ENCODE measurements at regions of chr7 and their contacts with region 1.

Region 1: DNA sequence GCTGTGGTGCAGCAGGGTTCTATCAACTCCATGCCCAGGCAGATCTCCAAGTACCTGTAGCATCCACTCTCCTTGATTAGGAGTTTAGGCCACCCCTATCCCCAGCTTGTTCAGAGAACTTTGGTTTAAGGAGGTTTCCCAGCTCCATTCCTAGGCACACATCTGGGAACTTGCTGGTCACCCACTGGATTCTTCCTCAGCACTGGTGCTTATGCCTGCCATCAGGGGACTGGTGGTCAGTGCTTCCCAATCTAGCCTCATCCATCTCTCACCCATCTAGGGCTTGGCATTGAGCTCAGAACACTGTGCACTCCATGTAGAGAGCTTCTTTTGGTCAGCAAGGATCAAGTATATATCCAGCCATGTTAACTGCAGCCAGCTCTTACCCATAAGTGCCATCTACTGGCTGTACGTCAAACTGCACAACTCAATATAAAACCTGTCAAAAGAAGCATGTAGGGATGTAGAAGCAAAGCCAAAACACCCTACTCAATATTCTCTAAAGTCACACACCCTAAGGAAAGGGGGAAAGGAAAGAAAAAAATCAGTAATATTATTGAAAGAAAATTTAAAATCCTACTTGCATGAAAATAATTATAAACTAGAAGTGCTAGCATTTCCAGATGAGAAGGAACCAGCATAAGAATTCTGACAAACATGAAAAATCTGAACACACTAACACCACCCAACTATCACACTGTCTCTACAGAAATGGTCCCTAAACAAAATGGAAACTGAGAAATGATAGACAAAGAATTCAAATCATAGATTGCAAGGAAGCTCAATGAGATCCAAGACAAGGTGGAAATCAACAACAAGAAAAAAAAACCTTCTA is 531.2 kb upstream of the STEAP1 start:
- DNase-seq: peak; percentile 52
- ATAC-seq: peak; percentile 84
- H3K4me3 ChIP-seq: no peak overlapping the region
- H3K27ac ChIP-seq: no peak overlapping the region
- H3K4me1 ChIP-seq: no peaks in the 10 kb centered on the region
- H3K27me3 ChIP-seq: no peaks in the 10 kb centered on the region
- CTCF ChIP-seq: peak; percentile 72

Region 2: DNA sequence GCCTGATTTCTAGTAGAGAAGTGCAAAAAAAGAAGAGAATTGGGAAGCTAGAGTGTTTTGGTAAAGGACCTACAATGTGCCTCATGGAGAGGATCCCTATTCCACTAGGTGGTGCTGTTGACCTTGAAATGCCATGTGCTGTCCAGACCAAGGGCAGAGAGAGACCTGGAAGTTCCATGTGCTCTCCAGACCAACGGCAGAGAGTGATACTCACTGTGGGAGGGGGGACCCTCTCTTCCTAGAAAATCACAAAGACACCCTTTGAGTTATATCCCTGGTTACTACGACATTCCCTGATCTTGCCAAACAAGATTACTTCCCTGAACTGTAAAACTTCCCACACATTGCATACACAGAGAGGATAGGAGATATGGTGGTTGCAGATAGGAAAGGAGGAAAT is 1076.2 kb before region 1 on chr7:
- CTCF ChIA-PET with region 1: interaction called, 3 read pairs
- POLR2A ChIA-PET with region 1: no interaction called
- intact Hi-C with region 1: loop called (anchors 5 kb)
- DNase-seq: peak; percentile 62
- ATAC-seq: peak; percentile 82
- H3K4me3 ChIP-seq: no peak overlapping the region
- H3K27ac ChIP-seq: no peak overlapping the region
- H3K4me1 ChIP-seq: no peaks in the 10 kb centered on the region
- H3K27me3 ChIP-seq: no peaks in the 10 kb centered on the region
- CTCF ChIP-seq: peak; percentile 68

Region 3: DNA sequence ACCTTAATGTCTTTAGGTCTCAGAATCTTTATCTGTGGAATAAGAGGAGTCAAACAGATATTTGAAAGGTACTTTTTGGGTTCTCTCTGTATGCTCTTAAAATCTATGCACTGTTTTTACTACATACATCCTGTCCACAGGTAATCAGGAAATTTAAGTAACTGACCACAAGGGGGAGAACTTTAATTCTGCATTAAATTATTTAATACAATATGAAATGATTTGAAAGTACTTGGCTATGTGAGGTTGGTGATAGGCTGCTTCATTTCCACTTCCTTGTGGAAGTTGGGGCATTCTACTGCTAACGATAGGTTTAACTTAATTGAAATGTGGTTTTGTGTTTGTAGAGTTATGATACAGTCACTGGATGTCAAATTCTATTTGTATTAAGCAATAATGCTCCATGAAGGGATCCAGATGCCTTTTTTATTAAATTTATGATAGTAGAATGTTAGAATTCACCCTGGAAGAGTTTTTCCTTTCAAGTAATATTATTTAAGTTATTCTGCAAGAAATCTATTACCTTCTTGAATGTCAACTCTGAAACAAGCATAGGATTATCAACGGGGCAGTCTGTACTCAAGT is 833.5 kb before region 1 on chr7:
- CTCF ChIA-PET with region 1: no interaction called
- POLR2A ChIA-PET with region 1: no interaction called
- intact Hi-C with region 1: loop called (anchors 2 kb)
- DNase-seq: peak; percentile 60
- ATAC-seq: peak; percentile 71
- H3K4me3 ChIP-seq: no peak overlapping the region
- H3K27ac ChIP-seq: no peak overlapping the region
- H3K4me1 ChIP-seq: no peaks in the 10 kb centered on the region
- H3K27me3 ChIP-seq: no peaks in the 10 kb centered on the region
- CTCF ChIP-seq: peak; percentile 67

Region 4: DNA sequence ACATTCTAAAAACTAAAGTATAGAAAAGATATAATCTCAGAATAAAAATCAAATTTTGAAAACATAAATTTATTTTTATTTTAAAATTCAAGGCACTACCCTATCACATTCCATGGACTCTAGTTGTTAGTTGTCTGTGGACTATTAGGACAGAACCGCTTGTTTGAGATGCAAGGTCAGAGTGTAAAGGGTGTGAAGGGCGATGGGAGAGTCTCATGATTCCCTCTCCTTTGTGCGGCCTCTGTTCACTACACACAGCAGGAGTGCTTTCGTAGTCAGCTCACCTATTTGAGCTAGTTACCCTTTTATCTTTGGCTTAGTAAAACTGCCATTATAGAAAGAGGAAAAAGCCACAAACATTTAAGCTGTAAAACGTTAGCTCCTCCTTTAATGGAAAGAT is 637.8 kb before region 1 on chr7:
- CTCF ChIA-PET with region 1: no interaction called
- POLR2A ChIA-PET with region 1: no interaction called
- intact Hi-C with region 1: loop called (anchors 2 kb)
- DNase-seq: no peak
- ATAC-seq: no peak
- H3K4me3 ChIP-seq: no peak overlapping the region
- H3K27ac ChIP-seq: no peak overlapping the region
- H3K4me1 ChIP-seq: no peaks in the 10 kb centered on the region
- H3K27me3 ChIP-seq: no peaks in the 10 kb centered on the region
- CTCF ChIP-seq: no peak

Region 5: GRCh38 chr7:89029864-89030263 is 593.2 kb before region 1 on chr7:
- CTCF ChIA-PET with region 1: no interaction called
- POLR2A ChIA-PET with region 1: no interaction called
- intact Hi-C with region 1: loop called (anchors 5 kb)
- DNase-seq: peak; percentile 45
- ATAC-seq: peak; percentile 55
- H3K4me3 ChIP-seq: no peak overlapping the region
- H3K27ac ChIP-seq: no peak overlapping the region
- H3K4me1 ChIP-seq: peaks cover 26% of the 10 kb centered on the region
- H3K27me3 ChIP-seq: no peaks in the 10 kb centered on the region
- CTCF ChIP-seq: no peak

Region 6: DNA sequence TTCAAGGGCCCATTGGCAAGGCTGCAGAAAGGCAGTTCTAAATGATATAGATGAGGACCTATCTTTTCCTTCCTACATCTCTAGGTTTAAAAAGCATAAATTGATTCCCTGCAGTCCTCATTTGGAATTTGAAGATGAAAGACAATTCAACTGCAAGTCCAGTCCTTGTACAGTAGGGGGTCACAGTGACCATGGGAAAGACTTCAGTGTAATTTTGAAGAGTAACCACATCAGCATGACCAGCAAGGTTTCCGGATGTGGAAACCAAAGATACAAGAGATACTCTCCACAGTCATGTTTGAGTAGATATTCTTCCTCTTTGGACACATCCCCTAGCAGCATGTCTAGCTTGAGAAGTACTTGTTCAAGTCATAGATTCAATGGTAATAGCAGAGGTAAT is 288.3 kb before region 1 on chr7:
- CTCF ChIA-PET with region 1: no interaction called
- POLR2A ChIA-PET with region 1: no interaction called
- intact Hi-C with region 1: loop called (anchors 2 kb)
- DNase-seq: peak; percentile 3
- ATAC-seq: no peak
- H3K4me3 ChIP-seq: no peak overlapping the region
- H3K27ac ChIP-seq: no peak overlapping the region
- H3K4me1 ChIP-seq: no peaks in the 10 kb centered on the region
- H3K27me3 ChIP-seq: no peaks in the 10 kb centered on the region
- CTCF ChIP-seq: no peak

Region 7: GRCh38 chr7:89593125-89593524 is 29.9 kb before region 1 on chr7:
- CTCF ChIA-PET with region 1: no interaction called
- POLR2A ChIA-PET with region 1: no interaction called
- intact Hi-C with region 1: no loop called
- DNase-seq: no peak
- ATAC-seq: no peak
- H3K4me3 ChIP-seq: no peak overlapping the region
- H3K27ac ChIP-seq: no peak overlapping the region
- H3K4me1 ChIP-seq: no peaks in the 10 kb centered on the region
- H3K27me3 ChIP-seq: no peaks in the 10 kb centered on the region
- CTCF ChIP-seq: no peak

Region 8: GRCh38 chr7:90119178-90119971 is 496.3 kb after region 1 on chr7:
- CTCF ChIA-PET with region 1: no interaction called
- POLR2A ChIA-PET with region 1: no interaction called
- intact Hi-C with region 1: loop called (anchors 10 kb)
- DNase-seq: no peak
- ATAC-seq: peak; percentile 70
- H3K4me3 ChIP-seq: peak overlapping the region; percentile 30
- H3K27ac ChIP-seq: no peak overlapping the region
- H3K4me1 ChIP-seq: no peaks in the 10 kb centered on the region
- H3K27me3 ChIP-seq: peaks cover 21% of the 10 kb centered on the region
- CTCF ChIP-seq: no peak